Aorta (tissue), 5 donors: ENCODE measurements at regions of chr5 and their contacts with region 1.

Region 1: GRCh38 chr5:150138551-150139265 is 16.9 kb downstream of the PDGFRB start:
- DNase-seq: peak; percentile 90 to 92
- ATAC-seq: peak; percentile 76
- H3K4me3 ChIP-seq: no peak overlapping the region
- H3K27ac ChIP-seq: peak overlapping the region; percentile 78 to 94
- H3K4me1 ChIP-seq: peaks cover 2 to 5% of the 10 kb centered on the region in 2 donors
- H3K27me3 ChIP-seq: no peaks in the 10 kb centered on the region

Region 2: GRCh38 chr5:150155258-150156026 is 16.7 kb after region 1 on chr5 and contains the start of gene PDGFRB:
- intact Hi-C with region 1: loop called in 1 of 2 experiments (anchors 2 kb)
- DNase-seq: peak; percentile 95 to 96
- ATAC-seq: peak; percentile 90
- H3K4me3 ChIP-seq: peak within 1 kb of the TSS; percentile 42 to 98
- H3K27ac ChIP-seq: peak within 1 kb of the TSS; percentile 71 to 97
- H3K4me1 ChIP-seq: peaks cover 2 to 3% of the 10 kb centered on the region in 2 donors
- H3K27me3 ChIP-seq: no peaks in the 10 kb centered on the region
- total RNA-seq, gene PDGFRB: 217 to 360 TPM

Region 3: GRCh38 chr5:150167908-150168307 is 29.2 kb after region 1 on chr5:
- intact Hi-C with region 1: no loop called
- DNase-seq: no peak
- ATAC-seq: no peak
- H3K4me3 ChIP-seq: no peak overlapping the region
- H3K27ac ChIP-seq: no peak overlapping the region
- H3K4me1 ChIP-seq: no peaks in the 10 kb centered on the region
- H3K27me3 ChIP-seq: no peaks in the 10 kb centered on the region

Region 4: DNA sequence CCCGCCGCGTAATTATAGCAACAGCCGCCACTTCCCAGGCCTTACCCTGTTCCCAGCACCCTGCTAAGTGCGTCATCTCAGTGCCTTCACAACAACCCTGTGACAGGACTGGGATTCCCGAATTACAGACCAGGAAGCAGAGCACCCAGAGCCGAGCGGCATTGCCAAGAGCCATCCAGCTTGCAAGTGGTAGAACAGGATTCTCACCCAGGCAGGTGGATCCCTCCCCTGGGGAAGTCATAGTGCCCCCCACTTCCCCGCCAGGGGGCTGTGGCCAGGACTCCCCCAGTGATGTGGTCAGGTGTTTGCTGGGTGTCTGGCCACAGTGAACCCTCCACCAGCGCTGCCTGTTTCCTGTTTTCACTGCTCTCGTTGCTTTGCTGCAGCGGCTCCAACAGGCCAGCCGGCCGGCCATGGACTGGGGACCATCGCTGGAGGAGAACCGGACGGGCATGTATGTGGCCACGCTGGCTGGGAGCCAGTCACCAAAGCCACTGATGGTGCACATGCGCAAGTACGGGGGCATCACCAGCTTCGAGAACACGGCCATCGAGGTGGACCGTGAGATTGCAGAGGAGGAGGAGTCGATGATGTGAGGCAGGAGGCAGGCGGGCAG is 70.4 kb after region 1 on chr5:
- intact Hi-C with region 1: no loop called
- DNase-seq: peak; percentile 73 to 80
- ATAC-seq: peak; percentile 57
- H3K4me3 ChIP-seq: no peak overlapping the region
- H3K27ac ChIP-seq: no peak overlapping the region
- H3K4me1 ChIP-seq: no peaks in the 10 kb centered on the region
- H3K27me3 ChIP-seq: no peaks in the 10 kb centered on the region

Region 5: DNA sequence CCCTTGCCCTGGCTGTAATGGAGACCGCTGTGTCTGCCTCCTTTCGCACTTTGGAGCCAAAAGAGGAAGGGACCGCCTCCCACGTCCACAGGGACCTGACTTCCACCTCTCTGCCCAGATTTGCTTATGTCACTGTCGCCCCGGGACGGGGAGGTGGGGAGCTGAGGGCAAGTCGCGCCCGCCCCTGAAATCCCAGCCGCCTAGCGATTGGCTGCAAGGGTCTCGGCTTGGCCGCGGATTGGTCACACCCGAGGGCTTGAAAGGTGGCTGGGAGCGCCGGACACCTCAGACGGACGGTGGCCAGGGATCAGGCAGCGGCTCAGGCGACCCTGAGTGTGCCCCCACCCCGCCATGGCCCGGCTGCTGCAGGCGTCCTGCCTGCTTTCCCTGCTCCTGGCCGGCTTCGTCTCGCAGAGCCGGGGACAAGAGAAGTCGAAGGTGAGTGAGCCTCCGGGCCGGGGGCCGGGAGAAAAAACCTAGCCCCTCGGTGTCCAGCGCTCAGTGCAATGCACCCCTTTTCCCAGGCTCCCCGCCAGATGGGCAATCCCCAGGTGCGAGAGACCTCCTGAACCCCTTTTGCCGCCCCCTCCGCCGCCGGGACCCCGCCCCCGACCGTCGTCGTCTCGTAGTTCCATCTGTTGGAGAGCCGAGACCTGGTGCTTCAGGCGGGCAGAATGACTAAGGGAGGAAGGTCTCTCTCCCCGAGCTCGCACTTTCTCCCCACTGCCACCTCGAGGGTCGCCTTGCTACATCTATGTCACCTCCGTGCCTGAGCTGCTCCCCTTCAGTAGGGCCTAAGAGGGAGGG is 881.8 kb after region 1 on chr5 and contains the start of gene GPX3:
- intact Hi-C with region 1: loop called in 1 of 2 experiments (anchors 5 kb)
- DNase-seq: peak; percentile 96 to 97
- ATAC-seq: peak; percentile 86
- H3K4me3 ChIP-seq: peak within 1 kb of the TSS; percentile 22 to 48
- H3K27ac ChIP-seq: peak within 1 kb of the TSS in 1 of 2 donors; percentile 37
- H3K4me1 ChIP-seq: no peaks in the 10 kb centered on the region
- H3K27me3 ChIP-seq: no peaks in the 10 kb centered on the region
- total RNA-seq, gene GPX3: 694 to 1,257 TPM